CD4-positive, alpha-beta T cell (primary cell): ENCODE measurements at regions of chr1 and their contacts with region 1.

Region 1: GRCh38 chr1:206658264-206658980 is 23.1 kb downstream of the DYRK3 start:
- DNase-seq: peak in 12 of 14 experiments; percentile 19 to 74 (median 42)
- ATAC-seq: peak; percentile 66
- H3K4me3 ChIP-seq: no peak overlapping the region
- H3K4me3 Mint-ChIP-seq: no peak overlapping the region
- H3K27ac ChIP-seq: no peak overlapping the region
- H3K27ac Mint-ChIP-seq: no peak overlapping the region
- H3K4me1 ChIP-seq: peaks cover 6% of the 10 kb centered on the region
- H3K4me1 Mint-ChIP-seq: no peaks in the 10 kb centered on the region
- H3K27me3 ChIP-seq: peaks cover 16 to 23% of the 10 kb centered on the region in 2 experiments
- H3K27me3 Mint-ChIP-seq: peaks cover 43% of the 10 kb centered on the region
- CTCF ChIP-seq: peak; percentile 53

Region 2: DNA sequence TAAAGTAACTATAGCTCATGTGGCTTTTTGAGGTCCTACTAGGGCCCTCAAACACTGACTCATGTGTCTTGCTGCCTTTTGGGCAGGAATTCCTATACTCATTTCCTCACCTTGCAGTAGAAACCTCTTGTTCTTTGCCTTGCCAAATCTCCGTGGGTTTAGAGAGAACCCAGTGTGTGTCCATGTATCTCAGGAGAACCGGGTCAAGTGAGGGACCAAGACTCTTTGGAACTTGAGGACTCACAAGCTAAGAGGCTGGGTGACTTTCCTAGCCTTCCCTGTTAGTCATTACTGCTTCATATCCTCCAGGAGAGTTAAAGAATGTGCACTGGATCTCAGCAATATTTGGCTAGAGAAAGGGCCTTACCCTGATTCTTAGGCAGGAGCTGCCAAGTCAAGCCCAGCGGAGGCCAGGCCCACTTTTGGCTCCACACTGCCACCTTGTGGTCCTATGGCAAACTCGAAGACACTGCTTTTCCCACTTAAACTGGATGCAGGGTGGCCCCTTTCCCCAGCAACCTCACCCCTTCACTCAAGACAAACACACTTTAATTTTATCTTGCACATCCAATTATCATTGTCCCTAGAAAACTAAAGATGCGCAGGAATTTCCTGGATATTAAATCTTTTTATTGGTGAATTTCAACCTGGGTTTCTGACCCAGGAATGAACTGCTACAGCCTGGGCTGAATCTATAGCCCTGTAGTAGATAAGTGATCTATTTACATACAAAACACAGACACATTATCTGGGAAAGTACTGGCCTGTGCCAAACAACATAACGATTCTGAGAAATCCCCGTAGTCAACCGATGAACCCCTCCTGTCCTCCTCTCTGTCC is 551.9 kb before region 1 on chr1:
- CTCF ChIA-PET with region 1: no interaction called
- POLR2A ChIA-PET with region 1: no interaction called
- intact Hi-C with region 1: no loop called
- DNase-seq: peak; percentile 53 to 86 (median 69)
- ATAC-seq: peak; percentile 73
- H3K4me3 ChIP-seq: no peak overlapping the region
- H3K4me3 Mint-ChIP-seq: no peak overlapping the region
- H3K27ac ChIP-seq: no peak overlapping the region
- H3K27ac Mint-ChIP-seq: no peak overlapping the region
- H3K4me1 ChIP-seq: no peaks in the 10 kb centered on the region
- H3K4me1 Mint-ChIP-seq: no peaks in the 10 kb centered on the region
- H3K27me3 ChIP-seq: peaks cover 0 to 3% of the 10 kb centered on the region in 2 experiments
- H3K27me3 Mint-ChIP-seq: no peaks in the 10 kb centered on the region
- CTCF ChIP-seq: peak; percentile 90

Region 3: DNA sequence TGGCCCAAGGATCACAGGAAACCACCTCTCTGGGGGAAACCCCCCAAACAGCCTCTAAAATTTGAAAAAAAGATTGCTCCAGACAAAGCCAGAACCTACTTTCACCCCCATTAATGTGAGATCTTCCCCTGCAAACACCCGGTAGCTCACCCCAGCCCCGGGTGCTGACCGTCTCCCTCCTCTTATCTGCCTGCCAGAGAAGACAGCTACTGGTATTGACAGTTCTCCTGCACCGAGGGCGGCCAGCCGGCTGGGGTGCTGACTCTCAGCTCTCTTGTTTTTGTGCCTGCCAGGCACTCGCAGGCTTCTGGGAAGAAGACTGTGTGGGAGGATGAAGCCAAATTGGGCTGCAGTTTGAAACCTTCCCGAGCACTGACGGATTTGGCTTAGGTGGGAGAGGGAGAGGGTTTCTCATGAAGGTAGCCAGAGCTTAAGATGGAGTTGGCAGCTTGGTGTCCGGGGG is 102.9 kb before region 1 on chr1:
- CTCF ChIA-PET with region 1: no interaction called
- POLR2A ChIA-PET with region 1: no interaction called
- intact Hi-C with region 1: no loop called
- DNase-seq: peak in 5 of 14 experiments; percentile 46 to 80 (median 60)
- ATAC-seq: no peak
- H3K4me3 ChIP-seq: peak overlapping the region; percentile 94
- H3K4me3 Mint-ChIP-seq: peak overlapping the region; percentile 97
- H3K27ac ChIP-seq: peak overlapping the region; percentile 18 to 99
- H3K27ac Mint-ChIP-seq: peak overlapping the region; percentile 86
- H3K4me1 ChIP-seq: peaks cover 78% of the 10 kb centered on the region
- H3K4me1 Mint-ChIP-seq: peaks cover 78% of the 10 kb centered on the region
- H3K27me3 ChIP-seq: no peaks in the 10 kb centered on the region
- H3K27me3 Mint-ChIP-seq: no peaks in the 10 kb centered on the region
- CTCF ChIP-seq: no peak

Region 4: DNA sequence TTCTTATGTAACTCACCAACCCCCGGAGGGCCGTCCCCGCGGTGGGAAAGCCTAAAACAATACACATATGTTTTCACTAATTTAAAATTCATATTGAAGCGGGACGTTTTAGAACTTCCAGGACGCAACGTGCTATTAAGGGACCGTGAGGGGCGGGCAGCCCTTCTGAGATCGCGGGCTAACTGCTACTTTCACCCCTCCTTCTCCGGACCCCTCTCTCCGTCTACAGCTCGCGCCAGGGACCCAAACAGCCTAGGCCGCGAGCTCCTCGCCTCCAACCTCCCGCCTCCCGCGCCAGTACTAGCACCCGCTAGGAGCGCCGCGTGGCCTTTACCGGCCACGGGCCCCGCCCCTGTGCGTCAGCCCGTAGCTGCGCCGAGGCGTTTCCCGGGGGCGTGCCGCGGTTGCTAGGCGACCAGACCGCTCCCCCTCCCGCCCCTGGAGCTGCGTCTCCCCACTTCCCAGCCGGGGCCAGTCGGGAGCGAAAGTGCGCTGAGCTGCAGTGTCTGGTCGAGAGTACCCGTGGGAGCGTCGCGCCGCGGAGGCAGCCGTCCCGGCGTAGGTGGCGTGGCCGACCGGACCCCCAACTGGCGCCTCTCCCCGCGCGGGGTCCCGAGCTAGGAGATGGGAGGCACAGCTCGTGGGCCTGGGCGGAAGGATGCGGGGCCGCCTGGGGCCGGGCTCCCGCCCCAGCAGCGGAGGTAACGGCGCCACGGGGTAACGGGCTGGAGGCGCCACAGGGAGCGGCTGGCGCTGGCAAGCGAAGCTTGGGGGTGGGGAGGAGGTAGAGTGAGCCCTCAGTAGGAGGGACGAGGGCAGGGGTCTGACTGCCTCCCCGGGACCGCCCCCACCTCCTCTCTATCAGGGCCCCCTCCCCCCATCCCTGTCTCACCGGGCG is 23.1 kb before region 1 on chr1 and contains the start of gene DYRK3:
- CTCF ChIA-PET with region 1: interaction called, 42 read pairs
- POLR2A ChIA-PET with region 1: interaction called, 3 read pairs
- intact Hi-C with region 1: no loop called
- DNase-seq: peak; percentile 74 to 95 (median 85)
- ATAC-seq: peak; percentile 93
- H3K4me3 ChIP-seq: peak within 1 kb of the TSS; percentile 64
- H3K4me3 Mint-ChIP-seq: peak within 1 kb of the TSS; percentile 92
- H3K27ac ChIP-seq: peak within 1 kb of the TSS in 1 of 2 donors; percentile 52
- H3K27ac Mint-ChIP-seq: peak within 1 kb of the TSS; percentile 66
- H3K4me1 ChIP-seq: peaks cover 20% of the 10 kb centered on the region
- H3K4me1 Mint-ChIP-seq: peaks cover 18% of the 10 kb centered on the region
- H3K27me3 ChIP-seq: peaks cover 0 to 14% of the 10 kb centered on the region in 2 experiments
- H3K27me3 Mint-ChIP-seq: no peaks in the 10 kb centered on the region
- CTCF ChIP-seq: no peak
- total RNA-seq, gene DYRK3: 1.6 to 1.7 TPM

Region 5: GRCh38 chr1:207259391-207259790 is 601.0 kb after region 1 on chr1:
- CTCF ChIA-PET with region 1: no interaction called
- POLR2A ChIA-PET with region 1: no interaction called
- intact Hi-C with region 1: no loop called
- DNase-seq: peak in 2 of 14 experiments; percentile 15 to 25
- ATAC-seq: no peak
- H3K4me3 ChIP-seq: no peak overlapping the region
- H3K4me3 Mint-ChIP-seq: no peak overlapping the region
- H3K27ac ChIP-seq: no peak overlapping the region
- H3K27ac Mint-ChIP-seq: no peak overlapping the region
- H3K4me1 ChIP-seq: no peaks in the 10 kb centered on the region
- H3K4me1 Mint-ChIP-seq: no peaks in the 10 kb centered on the region
- H3K27me3 ChIP-seq: no peaks in the 10 kb centered on the region
- H3K27me3 Mint-ChIP-seq: no peaks in the 10 kb centered on the region
- CTCF ChIP-seq: no peak